OCI-LY7 (cell line): ENCODE measurements at regions of chr7 and their contacts with region 1.

Region 1: DNA sequence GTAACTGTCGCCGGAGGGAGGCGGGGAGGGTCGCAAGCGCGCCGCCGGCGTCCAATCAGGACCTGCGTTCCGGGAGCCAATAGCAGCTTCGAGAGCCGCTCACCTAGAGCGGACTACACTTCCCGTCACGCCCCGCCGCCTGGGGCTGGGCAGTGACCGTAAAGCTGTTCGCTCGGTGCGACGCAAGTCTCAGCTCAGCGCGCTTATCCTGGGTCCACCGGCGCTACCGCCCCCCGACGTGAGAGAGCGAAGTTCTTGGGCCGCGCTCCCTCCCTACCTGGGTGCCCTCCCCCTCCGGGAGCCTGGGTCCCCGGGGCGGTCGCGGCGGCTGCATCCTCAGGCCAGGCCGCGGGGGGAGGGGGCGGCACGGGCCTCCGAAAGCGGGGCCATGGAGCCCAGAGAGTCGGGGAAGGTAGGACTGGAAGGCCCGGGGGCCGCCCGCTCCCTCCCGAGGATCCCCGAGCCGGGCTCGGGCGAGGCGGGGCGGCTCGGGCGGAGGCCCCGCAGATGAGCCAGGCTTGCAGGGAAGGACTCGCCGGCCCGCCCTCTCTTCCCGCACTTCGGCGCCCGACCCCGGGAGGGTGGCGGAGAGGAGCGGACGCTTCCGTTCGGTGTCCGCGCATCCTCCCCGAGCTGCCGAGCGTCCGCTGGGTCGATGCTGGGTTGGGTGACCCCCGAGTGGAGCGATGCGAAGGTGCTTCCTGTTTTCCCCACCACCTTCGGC is at the start of gene ZNF862:
- DNase-seq: peak; percentile 98
- H3K4me3 ChIP-seq: peak within 1 kb of the TSS; percentile 86
- H3K27ac ChIP-seq: peak within 1 kb of the TSS; percentile 30
- H3K4me1 ChIP-seq: peaks cover 6% of the 10 kb centered on the region
- CTCF ChIP-seq: no peak
- total RNA-seq, gene ZNF862: 7.9 and 9.2 TPM in 2 replicates

Region 2: DNA sequence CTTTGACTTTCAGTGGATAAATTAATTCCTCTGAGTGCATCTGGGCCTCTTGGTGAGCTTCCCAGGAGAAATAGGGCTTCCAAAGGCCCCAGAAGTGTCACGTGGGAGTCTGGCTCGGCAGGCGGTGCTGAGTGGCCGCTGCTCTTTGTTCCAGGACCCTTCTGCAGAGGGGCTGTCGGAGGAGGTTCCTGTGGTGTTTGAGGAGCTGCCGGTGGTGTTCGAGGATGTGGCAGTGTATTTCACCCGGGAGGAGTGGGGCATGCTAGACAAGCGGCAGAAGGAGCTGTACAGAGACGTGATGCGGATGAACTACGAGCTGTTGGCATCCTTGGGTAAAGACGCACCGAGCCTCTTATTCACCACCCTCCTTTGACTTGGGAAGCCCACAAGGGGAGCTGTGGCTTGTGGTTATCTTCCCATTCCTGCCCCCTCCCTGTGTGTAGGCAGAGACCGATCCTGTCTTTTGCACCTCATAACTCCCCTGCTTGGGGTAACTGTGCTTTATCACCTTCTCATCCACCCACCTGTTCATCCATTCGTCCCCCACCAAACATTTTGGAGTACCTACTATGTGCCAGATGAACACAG is 11.7 kb after region 1 on chr7:
- CTCF ChIA-PET with region 1: interaction called, 4 read pairs
- POLR2A ChIA-PET with region 1: interaction called, 11 read pairs
- intact Hi-C with region 1: no loop called
- DNase-seq: no peak
- H3K4me3 ChIP-seq: no peak overlapping the region
- H3K27ac ChIP-seq: no peak overlapping the region
- H3K4me1 ChIP-seq: peaks cover 7% of the 10 kb centered on the region
- CTCF ChIP-seq: no peak

Region 3: GRCh38 chr7:149873074-149873969 is 34.9 kb after region 1 on chr7 and contains the start of gene ATP6V0E2:
- CTCF ChIA-PET with region 1: interaction called, 3 read pairs
- POLR2A ChIA-PET with region 1: interaction called, 12 read pairs
- intact Hi-C with region 1: loop called (anchors 1 kb)
- DNase-seq: peak; percentile 95
- H3K4me3 ChIP-seq: peak within 1 kb of the TSS; percentile 75
- H3K27ac ChIP-seq: peak within 1 kb of the TSS; percentile 25
- H3K4me1 ChIP-seq: peaks cover 48% of the 10 kb centered on the region
- CTCF ChIP-seq: no peak
- total RNA-seq, gene ATP6V0E2: 35.2 and 38.6 TPM in 2 replicates